ENCODE measurements at regions of chr20 and their contacts with region 1.

Region 1: DNA sequence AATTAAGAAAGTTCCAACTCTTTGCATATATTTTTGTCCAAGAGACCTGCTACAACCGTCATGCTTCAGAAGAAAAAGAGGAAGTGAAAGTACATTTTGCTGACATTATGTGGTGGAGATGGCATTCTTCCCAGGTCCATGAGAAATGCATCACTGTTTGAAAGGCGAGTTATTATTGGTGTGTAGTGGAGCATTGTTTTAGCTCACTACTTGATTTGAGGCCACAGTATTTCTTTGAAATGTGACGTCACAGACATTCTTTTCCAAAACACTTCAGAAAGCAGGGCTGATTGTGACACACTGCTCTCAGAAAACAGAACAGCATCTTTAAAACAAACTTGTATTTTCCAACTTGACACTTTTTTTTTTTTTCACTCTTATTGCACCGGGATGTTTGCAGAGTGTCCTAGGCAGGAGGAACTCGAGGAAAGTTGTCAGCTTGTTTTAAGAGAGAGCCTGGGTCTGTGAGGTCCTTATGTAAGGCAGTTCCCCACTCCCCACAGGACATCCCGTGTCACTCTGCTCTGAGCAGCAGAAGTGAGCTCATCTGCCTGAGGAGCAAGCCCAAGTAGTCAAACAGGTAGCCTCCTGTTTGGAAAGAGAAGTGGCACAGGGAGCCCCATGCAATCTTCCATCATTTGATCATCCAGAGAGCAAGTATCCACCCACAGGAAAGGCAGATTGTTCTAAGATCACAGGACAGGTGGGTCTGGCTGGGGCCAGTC is 1.1 kb downstream of the SPTLC3 start:
- DNase-seq: peak; percentile 15
- H3K4me3 Mint-ChIP-seq: peak overlapping the region; percentile 57
- H3K27ac Mint-ChIP-seq: peak overlapping the region; percentile 37
- H3K4me1 Mint-ChIP-seq: peaks cover 28% of the 10 kb centered on the region
- H3K27me3 Mint-ChIP-seq: no peaks in the 10 kb centered on the region

Region 2: DNA sequence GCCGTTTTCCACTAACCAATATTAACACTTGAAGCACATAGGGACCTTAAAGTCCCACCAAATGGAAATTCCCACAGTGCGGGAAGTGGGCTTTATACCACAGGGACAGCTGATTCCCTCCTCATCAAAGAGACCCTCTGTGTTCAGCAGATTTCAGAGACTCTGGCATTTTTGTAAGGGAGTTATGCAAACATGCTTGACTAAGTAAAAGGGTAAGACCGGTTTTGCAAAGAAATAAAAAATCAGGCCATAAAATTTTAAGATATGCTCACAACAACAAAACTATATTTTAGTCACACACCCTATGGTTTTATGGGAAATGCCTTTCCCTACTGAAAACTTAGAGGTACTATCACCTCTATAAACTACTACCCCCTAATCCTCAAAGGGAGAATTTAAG is 46.4 kb before region 1 on chr20:
- CTCF ChIA-PET with region 1: no interaction called
- intact Hi-C with region 1: no loop called
- DNase-seq: no peak
- H3K4me3 Mint-ChIP-seq: no peak overlapping the region
- H3K27ac Mint-ChIP-seq: no peak overlapping the region
- H3K4me1 Mint-ChIP-seq: peaks cover 3% of the 10 kb centered on the region
- H3K27me3 Mint-ChIP-seq: no peaks in the 10 kb centered on the region

Region 3: DNA sequence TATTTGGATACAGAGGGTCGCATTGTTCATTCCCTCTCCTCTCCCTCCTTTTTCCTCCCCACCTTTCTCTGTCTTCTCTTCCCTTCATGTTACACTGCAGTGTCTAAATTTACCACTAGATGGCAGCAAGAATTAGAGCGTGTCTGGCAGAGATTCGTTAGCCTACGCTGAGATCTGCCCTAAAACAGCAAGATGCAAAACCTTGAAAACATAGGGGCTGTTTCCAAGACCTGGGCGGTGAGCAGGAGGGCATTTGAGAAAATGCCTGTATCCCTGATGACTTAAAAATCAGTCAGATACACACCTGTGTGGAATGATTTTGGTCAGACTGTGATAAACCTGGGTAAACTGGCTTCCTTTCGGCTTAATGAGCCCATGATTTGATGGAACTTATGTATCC is 109.7 kb after region 1 on chr20:
- CTCF ChIA-PET with region 1: no interaction called
- intact Hi-C with region 1: no loop called
- DNase-seq: peak; percentile 43
- H3K4me3 Mint-ChIP-seq: no peak overlapping the region
- H3K27ac Mint-ChIP-seq: no peak overlapping the region
- H3K4me1 Mint-ChIP-seq: no peaks in the 10 kb centered on the region
- H3K27me3 Mint-ChIP-seq: no peaks in the 10 kb centered on the region

Region 4: GRCh38 chr20:13243826-13244376 is 234.1 kb after region 1 on chr20:
- CTCF ChIA-PET with region 1: no interaction called
- intact Hi-C with region 1: loop called (anchors 1 kb)
- DNase-seq: no peak
- H3K4me3 Mint-ChIP-seq: no peak overlapping the region
- H3K27ac Mint-ChIP-seq: no peak overlapping the region
- H3K4me1 Mint-ChIP-seq: peaks cover 38% of the 10 kb centered on the region
- H3K27me3 Mint-ChIP-seq: no peaks in the 10 kb centered on the region

Measured in activated naive CD4-positive, alpha-beta T cell treated with anti-CD3 and anti-CD28 coated beads for 36 hours (primary cell).